H1 (cell line): ENCODE measurements at regions of chr19 and their contacts with region 1.

Region 1: GRCh38 chr19:49749055-49749716 is 13.9 kb downstream of the TSKS start:
- DNase-seq: no peak
- H3K4me3 ChIP-seq: no peak overlapping the region
- H3K27ac ChIP-seq: no peak overlapping the region
- H3K4me1 ChIP-seq: no peaks in the 10 kb centered on the region; a peak in 1 of 7 replicates
- H3K27me3 ChIP-seq: no peaks in the 10 kb centered on the region
- CTCF ChIP-seq: no peak
- EP300 ChIP-seq: no peak
- POLR2A ChIP-seq: no peak
- RAD21 ChIP-seq: no peak

Region 2: DNA sequence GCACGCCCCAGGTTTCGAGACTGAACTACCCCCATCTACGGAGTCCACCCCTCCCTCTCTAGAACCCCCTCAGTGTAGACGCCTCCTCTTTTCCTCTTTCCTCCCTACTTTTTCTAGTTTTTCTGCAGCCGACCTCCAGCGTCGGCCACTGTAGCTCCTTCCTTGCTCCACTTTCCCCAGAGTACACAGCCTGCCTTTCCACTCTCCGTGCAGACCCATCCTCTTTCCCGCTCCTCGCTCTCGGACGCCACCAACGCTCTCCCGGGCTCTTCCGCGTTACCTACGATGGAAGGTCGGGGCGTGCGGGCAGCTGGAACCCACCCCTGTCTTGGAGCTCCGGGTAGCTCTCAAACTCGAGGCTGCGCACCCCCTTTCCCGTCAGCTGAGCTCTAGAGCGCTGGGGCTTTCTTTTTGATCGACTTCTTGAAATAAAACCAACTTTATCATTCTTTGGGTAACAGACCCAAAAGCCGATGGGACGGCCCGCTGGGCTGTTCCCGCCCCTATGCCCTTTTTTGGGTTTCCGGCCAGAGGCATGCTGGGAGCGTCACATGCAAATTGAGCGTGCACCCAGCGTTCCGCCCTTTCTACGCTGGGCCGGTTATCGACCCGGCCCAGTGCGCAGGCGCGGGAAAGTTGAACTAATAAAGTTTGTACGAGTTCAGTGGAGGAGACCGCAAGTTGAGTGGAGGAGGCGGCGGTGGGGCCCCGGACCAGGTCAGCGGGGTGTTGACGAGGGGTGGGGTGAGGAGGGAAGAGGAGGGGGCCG is 83.7 kb before region 1 on chr19 and contains the starts of genes BCL2L12 and IRF3:
- CTCF ChIA-PET with region 1: no interaction called
- POLR2A ChIA-PET with region 1: no interaction called
- DNase-seq: peak; percentile 86 to 98
- H3K4me3 ChIP-seq: peak within 1 kb of the TSS; percentile 89 to 98 (median 96)
- H3K27ac ChIP-seq: peak within 1 kb of the TSS; percentile 72
- H3K4me1 ChIP-seq: peaks cover 0 to 7% (median 2%) of the 10 kb centered on the region in 4 experiments; a peak in 4 of 7 replicates
- H3K27me3 ChIP-seq: no peaks in the 10 kb centered on the region
- CTCF ChIP-seq: no peak
- EP300 ChIP-seq: no peak
- POLR2A ChIP-seq: no peak
- RAD21 ChIP-seq: no peak
- total RNA-seq, gene BCL2L12: 126 and 133 TPM in 2 replicates
- total RNA-seq, gene IRF3: 114 and 115 TPM in 2 replicates

Region 3: GRCh38 chr19:49766007-49766937 is 17.1 kb after region 1 on chr19:
- CTCF ChIA-PET with region 1: interaction called, 27 read pairs
- POLR2A ChIA-PET with region 1: interaction called, 8 read pairs
- DNase-seq: peak; percentile 96 to 100
- H3K4me3 ChIP-seq: peak overlapping the region; percentile 1 to 60 (median 35); a peak in 7 of 8 replicates
- H3K27ac ChIP-seq: peak overlapping the region; percentile 97
- H3K4me1 ChIP-seq: peaks cover 0 to 7% (median 3%) of the 10 kb centered on the region in 4 experiments; a peak in 5 of 7 replicates
- H3K27me3 ChIP-seq: no peaks in the 10 kb centered on the region
- CTCF ChIP-seq: no peak
- EP300 ChIP-seq: no peak
- POLR2A ChIP-seq: peak; percentile 54 to 98
- RAD21 ChIP-seq: no peak

Region 4: GRCh38 chr19:49808711-49809159 is 59.5 kb after region 1 on chr19:
- CTCF ChIA-PET with region 1: interaction called, 19 read pairs
- POLR2A ChIA-PET with region 1: interaction called, 8 read pairs
- DNase-seq: peak; percentile 94 to 99
- H3K4me3 ChIP-seq: peak overlapping the region; percentile 40 to 61 (median 52)
- H3K27ac ChIP-seq: no peak overlapping the region; the same call in 1 of the 2 replicates
- H3K4me1 ChIP-seq: peaks cover 6 to 17% (median 12%) of the 10 kb centered on the region in 4 experiments
- H3K27me3 ChIP-seq: no peaks in the 10 kb centered on the region
- CTCF ChIP-seq: no peak
- EP300 ChIP-seq: no peak
- POLR2A ChIP-seq: peak; percentile 66 to 80; a peak in 2 of 3 replicates
- RAD21 ChIP-seq: no peak

Region 5: GRCh38 chr19:49818649-49819370 is 69.6 kb after region 1 on chr19:
- CTCF ChIA-PET with region 1: no interaction called
- POLR2A ChIA-PET with region 1: no interaction called
- DNase-seq: no peak
- H3K4me3 ChIP-seq: peak overlapping the region; percentile 60 to 91 (median 82)
- H3K27ac ChIP-seq: peak overlapping the region; percentile 91
- H3K4me1 ChIP-seq: peaks cover 0 to 7% (median 4%) of the 10 kb centered on the region in 4 experiments; a peak in 3 of 7 replicates
- H3K27me3 ChIP-seq: no peaks in the 10 kb centered on the region
- CTCF ChIP-seq: no peak
- EP300 ChIP-seq: no peak
- POLR2A ChIP-seq: no peak
- RAD21 ChIP-seq: no peak

Region 6: DNA sequence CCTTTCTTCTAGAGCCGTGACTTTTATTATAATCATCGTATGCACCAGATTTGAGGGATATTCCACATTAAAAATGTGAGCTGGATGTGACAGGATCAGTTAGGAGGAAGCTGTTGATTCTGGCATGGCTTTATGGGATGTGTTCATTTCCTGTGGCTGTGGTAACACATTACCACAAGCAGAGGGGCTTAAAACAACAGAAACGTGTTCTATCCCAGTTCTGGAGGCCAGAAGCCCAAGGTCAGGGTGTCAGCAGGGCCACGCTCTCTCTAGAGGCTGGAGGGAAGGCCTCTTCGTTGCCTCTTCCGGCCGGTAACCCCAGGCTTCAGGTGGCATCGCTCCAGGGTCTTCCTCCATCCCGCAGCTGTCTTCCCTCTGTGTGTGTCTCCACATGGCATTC is 83.4 kb after region 1 on chr19:
- CTCF ChIA-PET with region 1: no interaction called
- POLR2A ChIA-PET with region 1: no interaction called
- DNase-seq: no peak
- H3K4me3 ChIP-seq: no peak overlapping the region
- H3K27ac ChIP-seq: no peak overlapping the region
- H3K4me1 ChIP-seq: no peaks in the 10 kb centered on the region
- H3K27me3 ChIP-seq: no peaks in the 10 kb centered on the region
- CTCF ChIP-seq: no peak
- EP300 ChIP-seq: no peak
- POLR2A ChIP-seq: no peak
- RAD21 ChIP-seq: no peak